Endothelial cell of umbilical vein (primary cell): ENCODE measurements at regions of chr12 and their contacts with region 1.

Region 1: GRCh38 chr12:49043856-49044258 is 16.7 kb downstream of the KMT2D start:
- DNase-seq: peak; percentile 39
- H3K4me3 ChIP-seq: no peak overlapping the region
- H3K27ac ChIP-seq: no peak overlapping the region
- H3K4me1 ChIP-seq: no peaks in the 10 kb centered on the region
- H3K27me3 ChIP-seq: no peaks in the 10 kb centered on the region
- CTCF ChIP-seq: peak; percentile 68 to 75
- POLR2A ChIP-seq: no peak

Region 2: DNA sequence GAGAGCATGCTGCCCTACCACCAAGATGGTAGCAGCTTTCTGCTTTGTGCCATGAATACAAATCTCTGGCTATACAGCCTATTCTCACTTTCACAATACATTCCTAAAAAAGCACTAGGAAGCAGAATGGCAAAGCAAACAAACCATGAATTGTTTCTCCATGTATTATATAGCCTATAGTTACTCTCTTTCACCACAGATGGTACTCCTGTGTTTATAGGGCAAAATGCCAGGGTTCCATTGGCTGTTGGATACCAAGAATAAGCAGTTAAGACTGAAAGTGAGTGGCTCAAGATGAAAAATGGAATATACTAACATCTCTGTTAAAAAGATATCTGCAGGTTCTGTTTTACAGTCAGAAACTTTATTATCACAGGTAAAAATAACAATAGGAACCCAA is 97.7 kb before region 1 on chr12:
- CTCF ChIA-PET with region 1: no interaction called
- POLR2A ChIA-PET with region 1: no interaction called
- dilution Hi-C with region 1: no loop called
- intact Hi-C with region 1: no loop called
- DNase-seq: no peak
- H3K4me3 ChIP-seq: no peak overlapping the region
- H3K27ac ChIP-seq: no peak overlapping the region
- H3K4me1 ChIP-seq: no peaks in the 10 kb centered on the region
- H3K27me3 ChIP-seq: no peaks in the 10 kb centered on the region
- CTCF ChIP-seq: no peak
- POLR2A ChIP-seq: no peak

Region 3: GRCh38 chr12:49033611-49034316 is 10.1 kb before region 1 on chr12:
- CTCF ChIA-PET with region 1: interaction called, 12 read pairs
- POLR2A ChIA-PET with region 1: no interaction called
- dilution Hi-C with region 1: no loop called
- intact Hi-C with region 1: no loop called
- DNase-seq: no peak
- H3K4me3 ChIP-seq: no peak overlapping the region
- H3K27ac ChIP-seq: no peak overlapping the region
- H3K4me1 ChIP-seq: no peaks in the 10 kb centered on the region
- H3K27me3 ChIP-seq: no peaks in the 10 kb centered on the region
- CTCF ChIP-seq: no peak
- POLR2A ChIP-seq: no peak